Activated naive CD4-positive, alpha-beta T cell treated with anti-CD3 and anti-CD28 coated beads for 36 hours (primary cell): ENCODE measurements at regions of chr7 and their contacts with region 1.

Region 1: GRCh38 chr7:154913638-154914312 is 89.1 kb downstream of the PAXIP1 start:
- DNase-seq: peak; percentile 92
- H3K4me3 Mint-ChIP-seq: peak overlapping the region; percentile 66
- H3K27ac Mint-ChIP-seq: no peak overlapping the region
- H3K4me1 Mint-ChIP-seq: peaks cover 6% of the 10 kb centered on the region
- H3K27me3 Mint-ChIP-seq: peaks cover 16% of the 10 kb centered on the region

Region 2: GRCh38 chr7:154892462-154892861 is 21.3 kb before region 1 on chr7:
- CTCF ChIA-PET with region 1: no interaction called
- intact Hi-C with region 1: no loop called
- DNase-seq: no peak
- H3K4me3 Mint-ChIP-seq: no peak overlapping the region
- H3K27ac Mint-ChIP-seq: no peak overlapping the region
- H3K4me1 Mint-ChIP-seq: no peaks in the 10 kb centered on the region
- H3K27me3 Mint-ChIP-seq: peaks cover 13% of the 10 kb centered on the region

Region 3: GRCh38 chr7:154953006-154953684 is 39.4 kb after region 1 on chr7:
- CTCF ChIA-PET with region 1: interaction called, 23 read pairs
- intact Hi-C with region 1: loop called (anchors 5 kb)
- DNase-seq: peak; percentile 80
- H3K4me3 Mint-ChIP-seq: no peak overlapping the region
- H3K27ac Mint-ChIP-seq: no peak overlapping the region
- H3K4me1 Mint-ChIP-seq: no peaks in the 10 kb centered on the region
- H3K27me3 Mint-ChIP-seq: no peaks in the 10 kb centered on the region

Region 4: DNA sequence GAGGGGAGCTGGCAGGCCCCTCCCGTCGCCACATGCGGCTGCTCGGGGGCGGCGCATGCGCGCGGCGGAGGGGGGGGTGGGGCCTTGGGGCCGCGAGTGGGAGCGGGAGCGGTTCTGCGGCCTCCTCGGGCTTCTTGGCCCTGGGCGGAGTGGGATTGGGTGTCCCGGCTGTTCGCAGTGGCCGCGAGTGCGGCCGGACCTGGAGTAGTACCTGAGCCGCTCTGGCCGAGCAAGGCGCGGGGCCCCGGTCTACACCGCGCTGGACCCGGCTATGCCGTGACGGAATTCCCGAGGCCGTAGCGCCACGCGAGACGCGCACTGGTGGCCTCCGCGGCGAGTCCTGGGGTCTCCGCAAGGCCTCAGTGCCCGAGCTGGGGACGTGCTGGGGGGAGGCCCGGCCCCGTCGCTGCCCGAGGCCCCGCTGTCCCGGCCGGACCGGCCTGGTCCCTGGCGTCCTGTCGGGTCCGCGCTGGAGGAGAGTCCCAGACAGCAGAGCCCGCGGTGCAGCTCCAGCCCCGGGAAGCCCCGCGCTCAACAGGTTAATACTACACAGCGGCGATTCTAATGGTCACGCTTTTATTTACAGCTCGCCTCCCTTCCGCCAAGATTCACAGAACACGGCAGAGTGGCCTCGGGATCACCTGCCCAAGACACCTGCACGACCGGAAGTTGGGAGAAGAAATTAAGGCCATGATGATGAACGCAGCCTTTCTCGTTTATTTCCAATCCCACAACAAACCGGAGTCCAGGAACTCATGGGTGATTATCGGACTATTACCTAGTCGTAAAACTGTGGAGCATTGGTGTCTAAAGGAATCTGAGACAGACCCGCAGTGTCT is 89.8 kb after region 1 on chr7:
- CTCF ChIA-PET with region 1: no interaction called
- intact Hi-C with region 1: loop called (anchors 5 kb)
- DNase-seq: peak; percentile 75
- H3K4me3 Mint-ChIP-seq: peak overlapping the region; percentile 92
- H3K27ac Mint-ChIP-seq: peak overlapping the region; percentile 89
- H3K4me1 Mint-ChIP-seq: peaks cover 7% of the 10 kb centered on the region
- H3K27me3 Mint-ChIP-seq: no peaks in the 10 kb centered on the region

Region 5: DNA sequence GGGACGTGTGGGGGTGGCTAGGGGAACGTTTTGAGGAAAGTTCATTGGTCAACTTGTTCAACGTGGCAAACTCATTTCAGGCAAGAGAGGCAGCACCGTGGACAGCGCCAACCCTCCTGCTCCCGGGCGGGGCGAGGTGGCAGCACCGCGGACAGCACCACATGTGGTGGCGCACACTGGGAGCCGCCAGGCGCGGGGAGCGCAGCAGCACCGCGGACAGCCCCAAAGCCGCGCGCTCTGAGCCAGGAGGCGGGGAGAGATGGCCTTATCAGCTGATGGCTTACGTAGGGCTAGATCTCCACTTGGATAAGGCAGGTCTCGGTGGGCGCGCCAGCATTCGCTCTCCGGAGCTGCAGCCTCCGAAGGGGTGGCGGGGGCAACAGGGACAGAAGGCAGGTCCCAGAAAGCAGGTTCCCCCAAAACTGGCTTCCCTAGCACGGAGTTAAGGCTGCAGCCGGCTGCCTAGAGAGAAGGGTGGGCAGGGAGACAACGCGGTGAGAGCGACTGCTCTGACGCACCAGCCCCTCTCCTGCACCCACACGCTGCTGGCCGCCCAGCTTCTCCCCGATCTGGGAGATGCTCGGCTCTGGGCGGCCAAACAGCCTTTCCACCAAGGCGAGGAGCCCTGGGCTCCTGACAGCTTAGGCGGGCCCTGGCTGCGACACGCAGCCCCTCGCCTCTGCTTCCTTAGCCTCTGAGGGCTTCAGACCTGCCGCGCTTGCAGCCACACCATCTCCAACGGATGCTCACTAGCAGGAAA is 156.4 kb after region 1 on chr7 and contains the start of gene HTR5A:
- CTCF ChIA-PET with region 1: no interaction called
- intact Hi-C with region 1: no loop called
- DNase-seq: peak; percentile 92
- H3K4me3 Mint-ChIP-seq: no peak within 1 kb of the TSS
- H3K27ac Mint-ChIP-seq: no peak within 1 kb of the TSS
- H3K4me1 Mint-ChIP-seq: peaks cover 2% of the 10 kb centered on the region
- H3K27me3 Mint-ChIP-seq: peaks cover 52% of the 10 kb centered on the region
- total RNA-seq, gene HTR5A: not detected

Region 6: GRCh38 chr7:155190688-155191087 is 276.9 kb after region 1 on chr7:
- CTCF ChIA-PET with region 1: no interaction called
- intact Hi-C with region 1: loop called (anchors 5 kb)
- DNase-seq: peak; percentile 69
- H3K4me3 Mint-ChIP-seq: no peak overlapping the region
- H3K27ac Mint-ChIP-seq: no peak overlapping the region
- H3K4me1 Mint-ChIP-seq: peaks cover 11% of the 10 kb centered on the region
- H3K27me3 Mint-ChIP-seq: peaks cover 13% of the 10 kb centered on the region

Region 7: DNA sequence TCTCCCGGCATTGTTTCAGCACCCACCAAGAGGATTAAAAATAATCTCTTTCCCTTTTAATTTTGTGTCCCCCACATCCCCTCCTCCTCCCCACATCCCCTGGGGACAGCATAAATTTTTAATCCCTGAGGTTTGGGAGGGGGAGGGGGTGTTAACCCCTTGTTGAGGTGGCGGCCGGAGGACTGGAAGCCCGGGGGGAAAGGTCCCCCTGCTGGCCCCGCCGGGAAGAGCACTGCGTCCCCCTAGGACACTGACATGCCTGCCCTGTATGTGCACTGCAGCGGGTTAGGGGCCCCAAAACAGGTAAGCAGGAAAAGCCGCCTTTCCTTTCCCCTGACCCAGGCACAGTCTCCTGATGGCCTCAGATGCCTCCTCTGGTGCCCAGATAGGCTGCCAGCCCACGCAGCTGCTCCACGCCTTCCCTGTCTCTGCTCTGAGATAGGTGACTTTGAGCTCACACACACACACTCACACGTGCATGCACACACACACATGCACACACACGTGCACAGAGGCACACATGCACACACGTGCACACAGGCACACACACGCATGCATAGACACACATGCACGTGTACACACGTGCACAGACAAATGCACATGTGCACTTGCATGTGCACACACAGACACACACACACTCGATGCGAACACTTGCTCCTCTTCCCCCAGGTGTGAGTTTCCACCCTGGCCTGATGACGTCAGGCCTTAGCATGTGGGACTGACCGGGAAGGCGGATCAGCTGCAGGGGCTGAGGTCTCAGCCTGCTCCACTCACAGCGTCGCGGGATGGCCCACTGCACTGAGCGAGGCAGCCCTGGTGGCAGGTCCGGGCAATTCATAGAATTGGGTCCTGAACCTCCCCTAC is 620.3 kb after region 1 on chr7:
- CTCF ChIA-PET with region 1: no interaction called
- intact Hi-C with region 1: loop called (anchors 5 kb)
- DNase-seq: peak; percentile 49
- H3K4me3 Mint-ChIP-seq: peak overlapping the region; percentile 6
- H3K27ac Mint-ChIP-seq: no peak overlapping the region
- H3K4me1 Mint-ChIP-seq: peaks cover 17% of the 10 kb centered on the region
- H3K27me3 Mint-ChIP-seq: peaks cover 69% of the 10 kb centered on the region